Tibial artery (tissue), 4 donors: ENCODE measurements at regions of chr7 and their contacts with region 1.

Region 1: GRCh38 chr7:104415700-104416099 is 87.3 kb downstream of the LHFPL3 start:
- DNase-seq: no peak
- H3K4me3 ChIP-seq: no peak overlapping the region
- H3K27ac ChIP-seq: no peak overlapping the region
- H3K4me1 ChIP-seq: no peaks in the 10 kb centered on the region
- H3K27me3 ChIP-seq: no peaks in the 10 kb centered on the region
- CTCF ChIP-seq: no peak

Region 2: DNA sequence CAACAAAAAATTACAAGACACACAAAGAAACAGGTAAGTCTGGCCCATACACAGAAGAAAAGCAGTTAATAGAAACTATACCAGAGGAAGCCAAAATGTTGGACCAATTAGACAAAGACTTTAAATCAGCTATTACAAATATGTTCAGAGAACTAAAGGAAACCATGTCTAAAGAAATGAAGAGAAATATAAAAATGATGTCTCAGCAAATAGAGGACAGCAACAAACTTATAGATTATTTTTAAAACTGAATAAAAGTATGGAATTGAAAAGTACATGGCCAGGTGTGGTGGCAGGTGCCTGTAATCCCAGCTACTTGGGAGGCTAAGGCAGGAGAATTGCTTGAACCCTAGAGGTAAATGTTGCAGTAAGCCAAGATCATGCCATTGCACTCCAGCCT is 28.8 kb before region 1 on chr7:
- intact Hi-C with region 1: loop called (anchors 1 kb)
- DNase-seq: no peak
- H3K4me3 ChIP-seq: no peak overlapping the region
- H3K27ac ChIP-seq: no peak overlapping the region
- H3K4me1 ChIP-seq: no peaks in the 10 kb centered on the region
- H3K27me3 ChIP-seq: no peaks in the 10 kb centered on the region
- CTCF ChIP-seq: no peak

Region 3: GRCh38 chr7:104469166-104469820 is 53.6 kb after region 1 on chr7:
- intact Hi-C with region 1: no loop called
- DNase-seq: no peak
- H3K4me3 ChIP-seq: no peak overlapping the region
- H3K27ac ChIP-seq: no peak overlapping the region
- H3K4me1 ChIP-seq: no peaks in the 10 kb centered on the region
- H3K27me3 ChIP-seq: no peaks in the 10 kb centered on the region
- CTCF ChIP-seq: no peak

Region 4: DNA sequence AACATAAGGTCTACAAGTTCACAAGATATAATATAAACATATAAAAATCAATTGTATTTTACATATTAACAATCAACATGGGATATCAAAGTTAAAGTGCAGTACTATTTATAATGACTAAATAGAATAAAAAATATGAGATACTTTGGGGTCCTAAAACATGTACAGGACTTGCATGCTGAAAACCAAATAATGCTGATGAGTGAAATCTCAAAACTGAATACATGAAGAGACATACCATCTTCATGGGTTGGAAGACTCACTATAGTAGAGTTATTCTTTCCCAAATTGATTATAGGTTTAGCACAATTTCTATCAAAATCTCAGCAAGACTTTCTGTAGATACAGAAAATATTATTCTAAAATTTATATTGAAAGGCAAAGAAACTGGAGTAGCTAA is 94.2 kb after region 1 on chr7:
- intact Hi-C with region 1: no loop called
- DNase-seq: no peak
- H3K4me3 ChIP-seq: no peak overlapping the region
- H3K27ac ChIP-seq: no peak overlapping the region
- H3K4me1 ChIP-seq: no peaks in the 10 kb centered on the region
- H3K27me3 ChIP-seq: no peaks in the 10 kb centered on the region
- CTCF ChIP-seq: no peak

Region 5: DNA sequence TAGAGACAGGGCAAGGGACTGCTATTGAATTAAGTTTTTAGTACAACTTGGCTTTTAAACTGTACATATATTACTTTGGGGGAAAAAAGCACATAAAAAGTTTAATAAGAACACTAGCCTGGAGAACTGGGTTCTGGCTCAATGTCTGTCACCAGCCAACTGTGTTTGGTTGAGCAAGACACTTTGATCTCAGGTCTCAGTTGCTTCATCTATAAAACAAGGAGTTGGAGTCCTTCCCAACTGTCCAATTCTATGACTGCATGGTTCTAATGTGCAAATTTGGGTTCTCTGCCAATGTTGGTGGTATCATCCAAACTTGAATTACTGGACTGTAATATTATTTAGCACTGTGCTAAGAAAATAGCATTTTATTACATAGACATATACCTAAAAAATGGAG is 1410.4 kb after region 1 on chr7:
- intact Hi-C with region 1: no loop called
- DNase-seq: no peak
- H3K4me3 ChIP-seq: no peak overlapping the region
- H3K27ac ChIP-seq: no peak overlapping the region
- H3K4me1 ChIP-seq: peaks cover 0 to 20% (median 10%) of the 10 kb centered on the region in 4 donors
- H3K27me3 ChIP-seq: no peaks in the 10 kb centered on the region
- CTCF ChIP-seq: no peak